Left cardiac atrium (tissue), 4 donors: ENCODE measurements at regions of chrX and their contacts with region 1.

Region 1: GRCh38 chrX:18596096-18596495 is 75.8 kb downstream of the RS1 start:
- DNase-seq: no peak
- ATAC-seq: no peak

Region 2: GRCh38 chrX:18425199-18426003 is 170.7 kb before region 1 on chrX and contains the start of gene CDKL5:
- intact Hi-C with region 1: loop called in 1 of 2 experiments (anchors 10 kb)
- DNase-seq: peak; percentile 98
- ATAC-seq: peak; percentile 97 to 99
- total RNA-seq, gene CDKL5: 8.1 to 8.3 TPM